PC-9 (cell line): ENCODE measurements at regions of chr7 and their contacts with region 1.

Region 1: DNA sequence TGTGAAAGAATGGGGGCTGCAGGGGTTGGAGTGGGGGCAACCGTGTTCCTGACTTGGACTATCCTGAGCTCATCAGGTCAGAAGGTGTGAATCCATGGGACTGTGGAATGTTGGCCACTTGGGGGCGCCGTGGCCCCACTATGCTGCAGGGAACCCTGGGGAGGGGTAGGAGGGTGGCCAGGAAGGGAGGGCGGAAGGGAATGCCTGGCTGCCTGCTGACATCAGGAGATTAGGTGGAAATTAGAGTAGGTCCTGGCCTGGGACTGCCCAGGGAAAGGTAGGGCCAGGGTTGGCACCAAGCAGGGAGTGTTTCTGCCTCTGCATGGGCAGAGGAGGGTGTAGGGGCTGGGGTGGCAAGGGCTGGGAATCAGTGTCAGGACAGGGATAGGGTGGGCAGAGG is 65.8 kb upstream of the PRSS58 start:
- DNase-seq: peak; percentile 66 to 85
- H3K4me3 ChIP-seq: no peak overlapping the region
- H3K27ac ChIP-seq: no peak overlapping the region
- H3K4me1 ChIP-seq: peaks cover 13% of the 10 kb centered on the region
- H3K27me3 ChIP-seq: no peaks in the 10 kb centered on the region
- CTCF ChIP-seq: peak; percentile 88

Region 2: GRCh38 chr7:141874787-141875186 is 448.9 kb before region 1 on chr7:
- CTCF ChIA-PET with region 1: no interaction called
- POLR2A ChIA-PET with region 1: no interaction called
- intact Hi-C with region 1: no loop called
- DNase-seq: no peak
- H3K4me3 ChIP-seq: no peak overlapping the region
- H3K27ac ChIP-seq: no peak overlapping the region
- H3K4me1 ChIP-seq: no peaks in the 10 kb centered on the region
- H3K27me3 ChIP-seq: no peaks in the 10 kb centered on the region
- CTCF ChIP-seq: no peak

Region 3: GRCh38 chr7:141975806-141976523 is 347.7 kb before region 1 on chr7:
- CTCF ChIA-PET with region 1: interaction called, 8 read pairs
- POLR2A ChIA-PET with region 1: no interaction called
- intact Hi-C with region 1: loop called (anchors 5 kb)
- DNase-seq: peak; percentile 44 to 86
- H3K4me3 ChIP-seq: no peak overlapping the region
- H3K27ac ChIP-seq: no peak overlapping the region
- H3K4me1 ChIP-seq: no peaks in the 10 kb centered on the region; the same call in 1 of the 2 replicates
- H3K27me3 ChIP-seq: no peaks in the 10 kb centered on the region
- CTCF ChIP-seq: peak; percentile 96

Region 4: GRCh38 chr7:142227477-142227876 is 96.2 kb before region 1 on chr7:
- CTCF ChIA-PET with region 1: no interaction called
- POLR2A ChIA-PET with region 1: no interaction called
- intact Hi-C with region 1: no loop called
- DNase-seq: no peak
- H3K4me3 ChIP-seq: no peak overlapping the region
- H3K27ac ChIP-seq: no peak overlapping the region
- H3K4me1 ChIP-seq: no peaks in the 10 kb centered on the region
- H3K27me3 ChIP-seq: no peaks in the 10 kb centered on the region
- CTCF ChIP-seq: no peak

Region 5: GRCh38 chr7:142357953-142358520 is 34.3 kb after region 1 on chr7:
- CTCF ChIA-PET with region 1: interaction called, 5 read pairs
- POLR2A ChIA-PET with region 1: no interaction called
- intact Hi-C with region 1: loop called (anchors 1 kb)
- DNase-seq: peak; percentile 71 to 75
- H3K4me3 ChIP-seq: peak overlapping the region; percentile 27; the same call in 1 of the 2 replicates
- H3K27ac ChIP-seq: peak overlapping the region; percentile 0; the same call in 1 of the 2 replicates
- H3K4me1 ChIP-seq: peaks cover 28% of the 10 kb centered on the region
- H3K27me3 ChIP-seq: no peaks in the 10 kb centered on the region
- CTCF ChIP-seq: peak; percentile 98

Region 6: DNA sequence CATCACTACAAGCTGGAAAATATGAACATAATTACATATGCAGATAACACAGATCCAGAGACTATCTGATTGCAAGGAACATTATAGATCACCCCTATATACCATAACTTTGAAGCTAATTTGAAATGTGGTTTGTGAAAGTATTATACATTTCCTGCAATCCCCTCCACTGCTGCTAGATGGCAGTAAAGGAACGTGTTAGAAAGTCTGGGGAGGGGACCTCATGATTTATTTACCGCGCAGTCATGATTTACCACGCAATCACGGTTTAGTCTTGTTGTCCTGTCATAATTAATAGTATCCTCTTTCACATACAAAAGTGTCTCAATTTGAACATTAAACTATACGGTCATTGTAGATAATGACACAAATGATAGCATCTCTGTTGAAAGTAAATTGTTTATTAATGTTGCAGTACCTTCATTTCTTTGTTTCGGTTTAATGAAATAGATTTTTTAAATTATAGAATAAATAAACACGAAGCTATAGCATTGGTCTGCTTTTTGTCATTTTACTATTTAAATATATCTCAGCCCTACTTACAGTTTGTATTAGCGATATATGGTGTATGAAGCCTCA is 280.3 kb after region 1 on chr7:
- CTCF ChIA-PET with region 1: no interaction called
- POLR2A ChIA-PET with region 1: no interaction called
- intact Hi-C with region 1: loop called (anchors 10 kb)
- DNase-seq: peak; percentile 51 to 65
- H3K4me3 ChIP-seq: peak overlapping the region; percentile 25; the same call in 1 of the 2 replicates
- H3K27ac ChIP-seq: no peak overlapping the region
- H3K4me1 ChIP-seq: peaks cover 18% of the 10 kb centered on the region
- H3K27me3 ChIP-seq: no peaks in the 10 kb centered on the region
- CTCF ChIP-seq: peak; percentile 97

Region 7: DNA sequence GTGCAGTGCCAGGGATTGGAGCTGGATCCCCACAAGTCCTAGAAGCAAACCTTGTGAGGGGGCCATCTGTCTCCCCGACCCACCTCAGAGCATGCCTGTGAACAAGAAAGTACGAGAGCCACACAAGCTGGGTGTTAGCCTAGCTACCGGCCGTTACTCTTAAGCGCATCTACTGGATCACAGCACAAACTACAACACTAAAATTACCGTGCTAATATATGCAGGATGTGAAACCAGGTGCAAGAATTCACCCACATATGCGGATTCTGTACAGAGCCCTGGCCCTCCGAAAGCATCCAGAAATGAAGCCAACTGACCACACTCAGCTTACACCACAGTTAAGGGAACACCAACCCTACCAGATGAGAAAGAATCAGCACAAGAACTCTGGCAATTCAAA is 409.6 kb after region 1 on chr7:
- CTCF ChIA-PET with region 1: no interaction called
- POLR2A ChIA-PET with region 1: no interaction called
- intact Hi-C with region 1: no loop called
- DNase-seq: no peak
- H3K4me3 ChIP-seq: no peak overlapping the region
- H3K27ac ChIP-seq: no peak overlapping the region
- H3K4me1 ChIP-seq: no peaks in the 10 kb centered on the region
- H3K27me3 ChIP-seq: no peaks in the 10 kb centered on the region
- CTCF ChIP-seq: no peak

Region 8: DNA sequence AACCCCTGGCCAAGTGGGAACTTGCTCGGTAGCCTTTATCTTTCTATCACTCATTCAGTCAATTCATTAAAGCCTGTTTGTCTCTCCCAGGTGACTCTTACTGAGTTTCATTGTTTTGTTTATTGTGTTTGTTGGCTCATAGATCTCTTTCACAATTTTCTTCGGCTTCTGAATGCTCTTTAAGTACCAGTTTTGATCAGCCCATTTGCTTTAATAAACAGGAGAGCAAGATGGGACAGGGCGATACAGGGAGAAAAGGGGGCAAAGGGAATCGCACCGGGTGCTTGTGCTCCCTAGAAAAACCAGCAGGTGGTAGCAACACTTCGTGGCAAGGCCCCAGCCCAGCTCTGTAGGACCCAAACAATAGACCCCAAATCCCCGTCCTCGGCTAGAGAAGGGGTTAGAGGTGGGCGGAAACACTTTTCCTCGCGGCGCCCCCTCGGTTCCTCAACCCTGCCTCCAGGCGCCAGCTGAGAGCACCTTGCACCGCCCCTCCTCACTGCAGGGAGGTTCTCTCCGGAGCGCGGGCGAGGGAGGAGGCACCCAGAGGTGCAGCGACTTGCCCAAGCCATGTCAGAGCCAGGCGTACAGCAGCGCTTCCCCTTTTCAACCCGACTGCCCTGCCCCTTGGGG is 530.1 kb after region 1 on chr7:
- CTCF ChIA-PET with region 1: no interaction called
- POLR2A ChIA-PET with region 1: no interaction called
- intact Hi-C with region 1: loop called (anchors 1 kb)
- DNase-seq: peak; percentile 78 to 85
- H3K4me3 ChIP-seq: peak overlapping the region; percentile 95
- H3K27ac ChIP-seq: peak overlapping the region; percentile 83
- H3K4me1 ChIP-seq: peaks cover 40% of the 10 kb centered on the region
- H3K27me3 ChIP-seq: no peaks in the 10 kb centered on the region
- CTCF ChIP-seq: peak; percentile 92

Region 9: GRCh38 chr7:143008007-143008901 is 684.5 kb after region 1 on chr7:
- CTCF ChIA-PET with region 1: no interaction called
- POLR2A ChIA-PET with region 1: no interaction called
- intact Hi-C with region 1: loop called (anchors 1 kb)
- DNase-seq: peak; percentile 55 to 80
- H3K4me3 ChIP-seq: no peak overlapping the region
- H3K27ac ChIP-seq: no peak overlapping the region
- H3K4me1 ChIP-seq: peaks cover 1% of the 10 kb centered on the region; the same call in 1 of the 2 replicates
- H3K27me3 ChIP-seq: no peaks in the 10 kb centered on the region
- CTCF ChIP-seq: peak; percentile 99